Dorsolateral prefrontal cortex (tissue), 120 donors: ENCODE measurements at regions of chr5 and their contacts with region 1.

Region 1: GRCh38 chr5:66595756-66596635 is at the start of gene MAST4:
- DNase-seq: peak; percentile 44 to 93 (median 82)
- H3K4me3 ChIP-seq: peak within 1 kb of the TSS; percentile 48 to 84 (median 76)
- H3K27ac ChIP-seq: peak within 1 kb of the TSS in 48 of 59 donors; percentile 24 to 90 (median 73)
- H3K27me3 ChIP-seq: peaks cover 0 to 13% (median 0%) of the 10 kb centered on the region in 45 donors
- CTCF ChIP-seq: peak in 1 of 56 donors; percentile 3
- total RNA-seq, gene MAST4: 32.2 to 102 (median 69.2) TPM

Region 2: DNA sequence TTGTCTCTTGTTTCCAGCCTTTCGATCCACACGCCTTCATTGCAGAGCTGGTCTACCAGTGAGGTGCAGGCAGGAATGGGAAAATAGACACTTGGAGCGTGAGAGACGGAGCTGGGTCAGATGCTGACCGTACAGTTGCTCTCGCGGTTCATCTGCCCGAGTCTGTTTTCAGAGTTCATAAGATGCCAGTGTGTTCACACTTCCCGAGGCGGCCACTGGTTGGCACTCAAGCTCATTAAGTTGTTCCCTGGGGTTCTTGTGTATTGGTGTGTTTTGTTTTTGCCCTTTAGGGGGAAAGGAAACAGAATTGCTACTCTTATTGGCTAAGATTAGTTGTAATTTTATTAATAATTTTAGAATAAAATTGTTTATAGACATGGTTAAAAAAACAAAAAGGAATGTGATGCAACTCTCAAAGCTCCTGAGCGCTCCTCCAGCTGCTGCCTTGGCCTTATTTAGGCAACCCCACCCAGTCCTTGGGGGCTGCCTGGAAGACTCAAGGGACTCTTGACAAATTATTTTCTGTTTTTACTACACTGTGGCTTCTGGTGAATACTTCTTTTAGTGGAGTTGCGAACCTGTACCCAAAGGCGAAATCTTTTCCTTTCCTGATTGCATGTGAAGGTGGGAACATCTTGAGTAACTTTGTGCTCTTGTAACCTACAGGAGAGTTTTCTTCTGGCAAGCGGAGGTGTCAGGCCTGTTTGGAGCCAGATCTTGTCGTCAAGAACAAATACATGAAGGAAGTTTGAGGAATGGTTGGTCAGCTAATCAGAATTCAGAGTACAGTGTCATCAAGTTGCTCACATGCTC is 146.3 kb after region 1 on chr5:
- intact Hi-C with region 1: loop called in 1 of 2 experiments (anchors 10 kb)
- DNase-seq: peak in 8 of 10 donors; percentile 16 to 66 (median 53)
- H3K4me3 ChIP-seq: peak overlapping the region in 8 of 59 donors; percentile 4 to 27 (median 13)
- H3K27ac ChIP-seq: peak overlapping the region in 13 of 59 donors; percentile 0 to 53 (median 16)
- H3K27me3 ChIP-seq: no peaks in the 10 kb centered on the region
- CTCF ChIP-seq: peak in 53 of 56 donors; percentile 11 to 56 (median 42)